ENCODE measurements at regions of chr22 and their contacts with region 1.

Region 1: GRCh38 chr22:17121227-17122195 is at the start of gene TMEM121B:
- DNase-seq: peak; percentile 94
- ATAC-seq: peak; percentile 74
- H3K4me3 Mint-ChIP-seq: peak within 1 kb of the TSS; percentile 76
- H3K27ac Mint-ChIP-seq: peak within 1 kb of the TSS; percentile 44
- H3K4me1 Mint-ChIP-seq: peaks cover 24% of the 10 kb centered on the region
- H3K27me3 Mint-ChIP-seq: peaks cover 3% of the 10 kb centered on the region; the same call in 1 of the 2 replicates
- CTCF ChIP-seq: no peak
- total RNA-seq, gene TMEM121B: 7.5 to 8.3 TPM (median 7.7 TPM) in 3 replicates

Region 2: DNA sequence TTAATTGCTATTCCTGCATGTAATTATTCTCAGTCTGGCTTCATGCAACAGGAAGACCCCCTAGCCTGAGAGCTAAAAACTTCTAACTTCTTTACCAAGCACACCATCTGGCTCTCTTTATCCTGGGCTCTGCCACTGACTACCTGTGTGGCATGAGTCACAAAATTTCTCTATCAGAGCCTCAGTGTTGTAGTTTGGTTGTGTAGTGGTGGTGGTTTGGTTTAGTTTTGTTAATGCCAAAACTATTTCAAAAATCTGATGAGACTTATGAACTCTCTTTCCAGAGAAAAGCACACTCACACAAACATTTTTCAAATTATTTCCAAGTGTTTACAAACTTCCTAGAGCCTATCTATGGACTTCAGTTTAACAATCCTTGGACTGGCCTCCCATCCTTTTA is 44.3 kb before region 1 on chr22:
- CTCF ChIA-PET with region 1: interaction called, 10 read pairs
- POLR2A ChIA-PET with region 1: no interaction called
- DNase-seq: no peak
- ATAC-seq: no peak
- H3K4me3 Mint-ChIP-seq: no peak overlapping the region
- H3K27ac Mint-ChIP-seq: no peak overlapping the region
- H3K4me1 Mint-ChIP-seq: no peaks in the 10 kb centered on the region; the same call in 1 of the 2 replicates
- H3K27me3 Mint-ChIP-seq: no peaks in the 10 kb centered on the region
- CTCF ChIP-seq: no peak

Region 3: DNA sequence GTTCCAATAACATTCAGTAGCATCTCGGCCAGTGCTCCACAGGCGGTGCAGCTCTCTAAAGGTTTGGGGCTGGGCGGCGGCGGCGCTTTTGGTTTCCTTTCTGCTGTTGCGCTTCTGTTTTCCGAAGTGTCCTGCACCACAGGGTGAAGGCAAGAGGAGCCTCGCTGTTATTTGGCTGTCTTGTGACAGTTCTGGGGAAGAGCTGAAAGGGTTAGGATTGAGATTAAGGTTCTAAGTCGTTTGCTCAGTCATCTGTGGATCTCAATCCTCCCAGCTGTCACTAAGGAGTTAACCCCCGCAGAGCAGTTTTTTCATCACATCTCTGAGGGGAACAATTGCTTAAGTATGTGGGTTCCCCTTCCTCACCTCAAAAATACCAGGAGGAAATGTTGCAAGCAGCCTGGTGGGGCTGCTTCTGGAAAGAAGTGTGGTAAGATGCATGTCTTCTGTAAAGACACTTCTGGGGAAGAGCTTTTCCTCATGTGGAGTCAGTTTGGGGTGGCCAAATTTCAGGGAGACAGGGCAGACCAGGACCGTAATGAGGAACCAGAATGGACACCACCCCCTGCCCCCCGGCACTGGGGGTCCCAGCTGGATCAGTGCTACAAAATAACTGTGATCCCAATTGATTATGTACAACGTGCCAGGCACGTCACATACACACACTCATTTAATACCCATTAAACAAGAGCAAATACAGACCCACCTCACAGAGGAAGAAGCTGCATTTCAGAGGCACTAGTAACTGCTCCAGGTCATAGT is 14.5 kb before region 1 on chr22:
- CTCF ChIA-PET with region 1: interaction called, 11 read pairs
- POLR2A ChIA-PET with region 1: no interaction called
- DNase-seq: no peak
- ATAC-seq: no peak
- H3K4me3 Mint-ChIP-seq: no peak overlapping the region
- H3K27ac Mint-ChIP-seq: no peak overlapping the region
- H3K4me1 Mint-ChIP-seq: peaks cover 4% of the 10 kb centered on the region; the same call in 1 of the 2 replicates
- H3K27me3 Mint-ChIP-seq: no peaks in the 10 kb centered on the region
- CTCF ChIP-seq: no peak

Region 4: DNA sequence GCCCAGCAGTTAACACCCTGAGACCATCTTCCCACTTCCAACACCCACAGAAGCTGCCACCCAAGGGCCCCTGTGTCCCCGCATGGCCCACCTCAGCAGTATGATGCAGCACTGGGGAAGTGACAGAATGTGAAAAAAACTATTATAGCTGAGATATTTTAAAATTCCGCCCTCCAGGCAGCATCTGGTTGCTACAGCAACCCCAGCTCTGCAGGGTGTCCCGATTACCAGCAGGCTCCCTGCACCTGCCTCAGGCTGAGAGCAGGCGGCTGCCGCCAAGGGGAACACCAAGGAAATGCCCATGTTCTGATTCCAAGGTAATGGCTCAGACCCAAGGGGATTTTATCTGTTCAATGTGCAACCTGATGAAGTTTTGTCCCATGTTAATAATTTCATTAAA is 10.2 kb after region 1 on chr22:
- CTCF ChIA-PET with region 1: interaction called, 16 read pairs
- POLR2A ChIA-PET with region 1: interaction called, 3 read pairs
- DNase-seq: peak; percentile 66
- ATAC-seq: peak; percentile 88
- H3K4me3 Mint-ChIP-seq: no peak overlapping the region
- H3K27ac Mint-ChIP-seq: no peak overlapping the region
- H3K4me1 Mint-ChIP-seq: peaks cover 13% of the 10 kb centered on the region
- H3K27me3 Mint-ChIP-seq: no peaks in the 10 kb centered on the region
- CTCF ChIP-seq: no peak

Region 5: GRCh38 chr22:17303840-17304779 is 182.6 kb after region 1 on chr22:
- CTCF ChIA-PET with region 1: no interaction called
- POLR2A ChIA-PET with region 1: no interaction called
- DNase-seq: no peak
- ATAC-seq: peak; percentile 50; the same call in 1 of the 2 replicates
- H3K4me3 Mint-ChIP-seq: no peak overlapping the region
- H3K27ac Mint-ChIP-seq: no peak overlapping the region
- H3K4me1 Mint-ChIP-seq: peaks cover 20% of the 10 kb centered on the region
- H3K27me3 Mint-ChIP-seq: no peaks in the 10 kb centered on the region
- CTCF ChIP-seq: no peak

Measured in WTC11 (cell line).